GM10248 (cell line): ENCODE measurements at regions of chr14 and their contacts with region 1.

Region 1: DNA sequence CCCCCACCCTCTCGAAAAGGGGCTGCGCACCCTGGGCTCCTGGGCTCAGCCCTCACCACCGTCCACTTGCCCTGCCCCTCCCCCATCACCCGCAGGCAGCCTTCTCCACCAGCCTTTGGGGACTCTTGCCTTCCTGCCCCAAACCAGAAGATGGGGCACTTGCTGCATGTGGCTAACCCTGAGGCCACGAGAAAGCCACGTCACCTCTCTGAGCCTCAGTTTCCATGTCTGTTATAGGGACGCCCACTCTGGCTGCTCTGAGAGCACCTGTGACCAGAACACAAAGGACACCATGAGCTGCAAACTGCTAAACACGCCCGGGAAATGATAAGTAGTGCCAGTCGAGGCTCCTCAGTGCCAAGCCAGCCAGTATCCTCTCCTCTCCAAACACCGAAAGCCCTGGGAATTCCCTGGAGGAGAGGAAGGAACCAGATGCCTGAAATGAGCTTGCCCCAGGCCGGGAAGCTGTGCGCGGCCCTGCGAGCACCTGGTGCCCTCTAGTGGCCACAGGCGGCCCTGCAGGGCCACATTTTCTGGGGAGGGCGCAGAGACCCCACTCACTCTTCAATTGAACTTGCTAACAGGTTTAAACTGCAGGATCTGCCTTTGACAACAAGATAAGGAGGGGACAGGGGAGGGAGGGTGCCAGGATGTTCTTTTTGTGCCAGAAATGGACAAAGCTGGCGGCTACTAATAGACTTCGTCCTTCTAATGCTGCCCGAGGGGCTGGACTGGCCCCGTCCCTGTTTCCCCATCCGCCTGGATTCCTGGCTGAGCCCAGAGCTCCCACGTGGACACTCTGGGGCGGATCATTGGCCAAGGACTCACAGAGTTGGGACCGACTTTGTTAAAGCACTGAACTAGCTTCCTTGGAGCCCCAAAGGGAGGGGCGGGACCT is 10.2 kb upstream of the SERPINA9 start:
- DNase-seq: peak; percentile 80
- CTCF ChIP-seq: peak; percentile 99

Region 2: DNA sequence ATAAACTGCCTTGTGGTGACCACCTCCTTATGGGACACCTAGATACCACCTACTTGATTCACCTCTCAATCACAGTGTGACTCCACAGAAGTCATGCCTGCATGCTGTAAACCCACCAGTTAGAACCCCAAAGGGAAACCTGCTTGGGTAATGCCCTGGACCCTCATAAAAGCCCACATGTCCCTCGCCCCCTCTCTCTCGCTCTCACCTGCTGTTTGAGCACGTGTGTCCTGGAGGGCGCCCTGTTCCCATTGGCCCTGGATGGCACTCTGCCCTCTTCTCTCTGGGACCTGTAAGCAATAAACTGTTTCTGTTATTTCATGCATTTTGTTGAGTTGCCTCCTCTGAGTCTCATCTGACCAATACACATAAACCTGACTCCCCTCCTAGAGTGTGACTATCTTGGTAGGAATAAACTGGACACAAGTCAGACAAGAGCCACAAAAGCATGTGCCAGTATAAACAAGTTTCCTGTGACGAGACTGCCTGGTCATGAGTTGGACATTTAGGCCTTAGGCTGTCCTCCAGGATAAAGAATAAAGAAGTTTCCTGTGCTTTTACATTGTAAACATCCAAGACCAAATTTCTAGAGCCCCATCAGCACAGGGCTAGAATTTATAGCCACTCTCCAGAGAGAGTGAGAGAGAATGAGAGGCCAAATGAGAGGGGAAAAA is 365.4 kb before region 1 on chr14:
- CTCF ChIA-PET with region 1: no interaction called
- POLR2A ChIA-PET with region 1: no interaction called
- DNase-seq: no peak
- CTCF ChIP-seq: no peak

Region 3: DNA sequence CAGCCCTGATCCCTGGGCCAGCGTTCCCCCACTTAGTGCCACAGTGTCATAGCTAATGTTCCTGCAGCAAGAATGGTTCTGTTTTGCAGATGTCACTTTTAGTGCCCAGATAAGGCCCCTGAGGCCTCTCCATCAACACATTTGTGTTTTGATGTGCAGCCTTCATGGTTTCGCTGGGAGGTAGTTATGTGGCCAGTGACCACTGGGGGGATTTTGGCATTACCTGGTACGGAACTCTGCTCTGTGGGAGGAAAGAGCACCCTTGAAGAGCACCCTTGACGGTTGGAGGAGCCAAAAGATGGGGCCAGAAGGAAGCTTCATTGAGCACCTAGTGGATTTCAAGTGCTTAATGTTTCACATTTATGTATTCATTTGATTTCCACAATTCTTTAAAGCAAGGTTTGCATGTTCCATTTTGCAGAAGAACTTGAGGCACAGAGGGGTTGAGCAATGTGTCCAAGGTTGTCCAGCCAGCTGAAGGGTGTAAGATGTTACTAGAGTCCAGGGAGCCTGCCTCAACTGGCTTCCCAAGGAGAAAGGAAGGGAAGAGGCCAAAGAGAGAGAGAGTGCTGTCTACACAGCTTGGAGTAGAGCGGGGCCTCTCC is 46.6 kb before region 1 on chr14:
- CTCF ChIA-PET with region 1: interaction called, 33 read pairs
- POLR2A ChIA-PET with region 1: no interaction called
- DNase-seq: no peak
- CTCF ChIP-seq: no peak

Region 4: DNA sequence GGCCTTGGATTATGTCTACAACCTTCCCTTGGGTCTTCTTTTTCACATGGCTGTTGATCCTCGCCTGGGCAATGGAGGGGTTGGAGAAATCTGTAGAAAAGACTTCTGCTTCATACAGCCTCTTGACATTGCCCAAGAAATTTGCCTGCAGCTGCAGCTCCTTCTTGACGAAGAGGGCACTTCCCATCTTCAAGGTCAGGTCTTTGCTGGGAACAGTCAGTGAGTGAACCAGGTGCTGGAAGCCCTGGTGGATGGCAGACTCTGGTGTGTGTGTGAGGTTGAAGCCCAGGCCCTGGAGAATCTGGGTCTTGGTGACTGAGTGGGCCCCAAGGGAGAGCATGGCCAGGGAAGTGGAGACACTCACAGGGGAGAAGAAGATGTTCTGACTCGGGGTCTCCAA is 16.9 kb before region 1 on chr14:
- CTCF ChIA-PET with region 1: interaction called, 17 read pairs
- POLR2A ChIA-PET with region 1: no interaction called
- DNase-seq: no peak
- CTCF ChIP-seq: no peak

Region 5: DNA sequence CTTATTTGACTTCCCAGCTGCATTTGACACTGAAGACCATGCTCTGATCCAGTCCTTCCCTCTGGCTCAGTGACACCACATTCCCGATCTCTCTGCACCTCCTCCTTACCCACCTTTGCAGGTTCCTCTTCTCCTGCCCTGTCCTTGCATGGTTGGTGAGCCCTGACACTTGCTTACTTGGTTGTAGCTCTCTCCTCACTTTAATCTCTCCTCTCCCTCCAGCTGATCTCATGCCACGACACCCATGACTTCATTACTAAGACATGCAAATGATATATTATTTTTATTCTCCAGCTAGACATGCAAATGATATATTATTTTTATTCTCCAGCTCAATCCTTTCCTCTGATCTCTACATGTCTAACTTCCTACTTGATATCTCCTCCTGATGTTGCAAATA is 10.2 kb before region 1 on chr14 and contains the start of gene SERPINA9:
- CTCF ChIA-PET with region 1: interaction called, 29 read pairs
- POLR2A ChIA-PET with region 1: no interaction called
- DNase-seq: no peak
- CTCF ChIP-seq: no peak

Region 6: GRCh38 chr14:94531187-94531586 is 45.0 kb after region 1 on chr14:
- CTCF ChIA-PET with region 1: interaction called, 11 read pairs
- POLR2A ChIA-PET with region 1: no interaction called
- DNase-seq: no peak
- CTCF ChIP-seq: no peak

Region 7: GRCh38 chr14:94536823-94537222 is 50.6 kb after region 1 on chr14:
- CTCF ChIA-PET with region 1: interaction called, 10 read pairs
- POLR2A ChIA-PET with region 1: no interaction called
- DNase-seq: no peak
- CTCF ChIP-seq: no peak

Region 8: DNA sequence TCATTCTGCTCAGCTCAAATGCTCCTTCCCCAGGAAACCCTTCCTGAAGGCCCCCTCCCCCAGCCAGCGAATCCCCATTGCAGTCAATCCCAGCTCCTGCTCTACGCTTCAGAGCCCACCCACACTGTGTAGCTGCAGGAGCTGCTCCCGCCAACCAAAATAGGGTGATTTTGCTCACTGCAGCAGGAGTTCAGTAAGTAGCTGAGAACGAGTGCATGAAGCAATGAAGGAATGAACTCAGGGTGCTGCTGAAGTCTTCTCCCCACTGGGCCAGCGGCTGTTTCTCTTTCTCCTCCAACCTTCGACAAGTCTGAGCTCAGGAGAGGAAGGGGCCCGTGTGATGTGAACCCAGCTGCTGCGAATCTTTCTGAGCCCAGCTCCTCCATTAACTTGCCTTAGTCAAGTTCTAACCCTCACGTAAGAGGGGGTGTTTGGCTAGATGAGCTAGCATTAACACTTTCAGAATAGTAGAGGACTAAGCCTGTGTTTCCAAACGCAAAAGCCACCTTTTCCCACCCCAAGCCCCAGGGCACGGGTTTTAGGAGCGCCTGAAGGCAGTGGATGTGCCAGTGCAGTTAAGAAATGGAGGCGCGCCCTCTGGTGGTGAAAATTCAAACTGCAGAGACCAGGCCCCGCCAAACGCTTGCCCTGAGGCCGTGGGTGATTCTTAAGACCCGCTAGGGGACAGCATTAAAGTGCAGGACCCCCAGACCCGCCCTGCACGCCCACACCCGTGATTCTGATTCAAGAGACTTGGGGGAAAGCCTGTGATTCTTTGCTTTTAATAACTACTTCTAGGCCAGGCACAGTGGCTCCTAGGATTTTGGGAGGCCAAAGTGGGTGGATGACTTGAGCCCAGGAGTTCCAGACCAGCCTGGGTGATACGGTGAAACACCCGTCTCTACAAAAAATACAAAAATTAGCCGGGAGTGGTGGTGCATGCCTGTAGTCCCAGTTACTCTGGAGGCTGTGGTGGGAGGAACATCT is 63.1 kb after region 1 on chr14:
- CTCF ChIA-PET with region 1: interaction called, 15 read pairs
- POLR2A ChIA-PET with region 1: no interaction called
- DNase-seq: peak; percentile 67
- CTCF ChIP-seq: peak; percentile 73

Region 9: DNA sequence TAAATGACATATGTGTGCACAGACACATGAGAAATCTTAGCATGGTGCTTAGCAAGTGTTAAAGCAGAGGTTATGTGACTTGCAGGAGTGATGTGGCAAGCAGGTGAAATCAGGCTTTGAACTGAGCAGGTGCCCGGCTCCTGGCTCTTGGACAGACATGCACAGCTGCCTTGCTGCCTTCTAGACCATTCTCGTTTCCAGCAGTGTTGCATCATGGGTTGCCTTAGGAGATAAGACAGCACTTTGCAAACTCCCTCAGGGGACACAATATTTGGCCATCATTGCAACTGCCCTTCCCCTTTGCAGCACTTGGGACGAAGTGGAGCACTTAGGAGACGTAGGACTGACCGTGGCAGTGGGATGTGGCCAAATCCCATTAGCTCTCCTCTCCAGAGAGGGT is 300.9 kb after region 1 on chr14:
- CTCF ChIA-PET with region 1: no interaction called
- POLR2A ChIA-PET with region 1: no interaction called
- DNase-seq: no peak
- CTCF ChIP-seq: no peak